ENCODE measurements at regions of chr22 and their contacts with region 1.

Region 1: DNA sequence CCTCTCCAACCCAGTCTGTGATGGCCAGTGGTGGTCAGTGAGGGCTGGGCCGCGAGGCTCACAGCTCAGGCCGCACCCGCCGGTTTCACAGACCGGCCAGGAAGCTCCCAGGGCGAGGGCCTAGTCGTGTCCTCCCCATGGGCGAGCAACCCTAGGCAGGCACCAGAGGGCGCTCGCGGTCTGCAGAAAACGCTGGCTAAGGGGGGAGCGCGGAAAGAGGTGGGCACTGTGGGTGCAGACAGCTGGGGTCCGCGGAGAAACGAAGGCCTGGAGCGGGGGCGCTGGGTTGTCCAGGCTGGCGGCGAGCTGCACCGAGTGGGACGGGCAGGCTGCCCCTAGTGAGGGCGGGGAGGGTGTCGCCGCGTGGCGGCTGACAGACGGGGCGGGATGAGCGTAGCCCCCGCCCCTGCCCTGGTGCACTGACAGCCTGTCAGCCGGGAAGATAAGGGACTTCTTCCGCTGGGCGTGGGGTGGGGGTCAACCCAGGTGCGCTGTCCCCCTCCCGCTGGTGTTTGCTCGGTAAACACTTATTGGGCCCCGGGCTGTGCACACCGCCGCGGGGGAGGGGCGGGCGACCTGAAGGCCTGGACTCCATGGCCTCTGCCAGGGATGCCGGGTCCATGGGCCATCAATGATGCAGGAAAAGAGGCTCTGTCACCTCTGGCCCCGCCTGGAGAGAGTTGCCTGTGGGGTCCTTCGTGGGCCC is 7.5 kb downstream of the GP1BB start:
- DNase-seq: peak; percentile 87
- ATAC-seq: peak; percentile 93
- H3K4me3 Mint-ChIP-seq: peak overlapping the region; percentile 44
- H3K27ac Mint-ChIP-seq: no peak overlapping the region
- H3K4me1 Mint-ChIP-seq: peaks cover 3% of the 10 kb centered on the region
- H3K27me3 Mint-ChIP-seq: peaks cover 3% of the 10 kb centered on the region

Region 2: DNA sequence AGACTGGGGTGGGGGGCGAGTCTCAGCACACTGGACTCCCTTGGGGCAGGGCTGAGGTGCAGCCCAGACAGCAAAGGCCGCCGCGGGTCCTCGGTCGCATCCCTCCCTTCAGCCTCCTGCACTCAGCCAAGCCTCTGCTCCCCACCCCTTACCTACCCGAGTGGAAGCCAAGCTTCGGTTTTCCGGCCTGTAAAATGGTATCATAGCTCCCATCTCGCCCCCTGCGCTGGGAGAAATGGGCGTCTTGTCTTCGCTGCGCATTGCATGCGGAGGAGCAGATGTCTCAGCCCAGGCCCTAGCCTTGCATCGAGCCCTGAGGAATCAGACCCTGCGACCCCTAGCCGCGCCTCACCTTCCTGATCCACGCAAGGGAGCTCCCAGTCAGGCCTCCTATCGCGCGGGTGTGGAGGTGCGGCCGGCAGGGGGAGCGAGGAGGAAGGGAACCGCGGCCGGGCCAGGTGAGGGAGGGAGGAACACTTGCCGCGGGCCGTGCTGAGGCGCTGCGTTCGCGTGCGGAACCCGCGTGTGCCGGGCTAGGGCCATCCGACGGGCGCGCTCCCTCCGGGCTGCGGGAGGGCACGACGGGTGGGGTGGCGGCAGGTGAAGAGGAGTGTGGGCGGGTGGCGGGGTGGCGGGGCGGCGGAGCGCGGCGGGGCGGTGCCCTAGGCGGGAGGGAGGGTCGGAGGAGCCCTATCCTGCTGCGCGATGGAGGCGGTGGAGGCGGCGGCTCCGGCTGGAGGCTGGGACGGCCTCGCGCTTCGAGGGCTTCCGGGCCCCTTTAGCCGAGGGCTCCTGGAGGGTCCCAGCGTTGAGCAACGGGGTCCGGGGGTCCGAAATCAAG is 25.7 kb after region 1 on chr22:
- CTCF ChIA-PET with region 1: interaction called, 24 read pairs
- DNase-seq: peak; percentile 73
- ATAC-seq: peak; percentile 75
- H3K4me3 Mint-ChIP-seq: no peak overlapping the region
- H3K27ac Mint-ChIP-seq: no peak overlapping the region
- H3K4me1 Mint-ChIP-seq: peaks cover 16% of the 10 kb centered on the region
- H3K27me3 Mint-ChIP-seq: peaks cover 70% of the 10 kb centered on the region

Region 3: DNA sequence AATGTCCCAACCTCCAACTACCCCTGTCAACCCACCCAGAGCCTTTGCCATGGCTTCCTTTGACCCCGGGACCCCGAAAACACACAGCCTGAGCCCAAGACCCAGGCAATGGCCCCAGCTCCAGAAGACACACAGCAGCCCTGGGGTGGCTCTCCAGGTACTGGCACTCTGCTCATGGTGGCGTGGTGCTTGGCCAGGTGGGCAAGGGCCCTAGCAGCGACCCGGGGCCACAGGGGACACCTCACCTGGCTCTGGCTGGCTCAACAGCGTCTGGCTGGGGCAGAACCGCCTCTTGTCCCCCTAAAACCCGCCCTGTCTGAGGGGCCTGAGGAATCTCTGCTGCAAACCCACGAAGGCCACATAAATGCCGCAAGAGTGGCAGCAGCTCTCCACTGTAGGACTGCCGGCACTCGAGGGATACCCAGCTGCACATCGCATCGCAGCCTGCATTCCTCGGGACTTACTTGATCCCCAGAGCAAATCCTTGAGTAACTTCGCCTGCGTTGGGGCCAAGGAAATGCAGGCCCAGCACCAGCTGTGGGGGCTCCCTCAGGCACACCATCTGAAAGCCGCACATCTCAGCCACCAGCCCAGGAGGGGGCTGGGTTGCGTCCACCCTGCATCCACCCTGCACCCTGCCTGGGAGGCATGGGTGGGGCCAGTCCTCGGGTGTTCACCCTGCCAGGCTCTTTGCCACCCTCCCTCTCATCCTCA is 147.0 kb after region 1 on chr22:
- CTCF ChIA-PET with region 1: no interaction called
- DNase-seq: no peak
- ATAC-seq: no peak
- H3K4me3 Mint-ChIP-seq: no peak overlapping the region
- H3K27ac Mint-ChIP-seq: no peak overlapping the region
- H3K4me1 Mint-ChIP-seq: peaks cover 3% of the 10 kb centered on the region
- H3K27me3 Mint-ChIP-seq: no peaks in the 10 kb centered on the region

Region 4: DNA sequence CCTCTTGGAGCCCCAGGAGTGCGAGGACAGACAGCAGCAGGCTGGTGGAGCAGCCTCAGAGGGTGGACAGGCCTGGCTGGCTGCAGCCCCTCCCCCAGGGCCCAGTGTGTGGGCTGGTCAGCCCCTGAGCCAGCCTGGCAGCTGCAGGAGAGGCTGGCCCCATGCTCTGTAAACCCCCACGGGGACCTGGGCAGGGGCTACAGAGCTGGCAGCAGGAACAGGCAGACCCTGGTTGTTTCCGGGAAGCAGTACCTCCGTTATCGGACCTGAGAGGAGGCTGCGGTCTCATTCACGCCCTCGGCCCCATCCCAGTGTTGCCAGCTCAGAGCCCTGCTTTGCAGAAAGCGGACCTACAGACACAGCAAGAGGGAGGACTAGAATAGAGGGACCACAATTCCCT is 172.2 kb after region 1 on chr22:
- CTCF ChIA-PET with region 1: interaction called, 35 read pairs
- DNase-seq: no peak
- ATAC-seq: no peak
- H3K4me3 Mint-ChIP-seq: no peak overlapping the region
- H3K27ac Mint-ChIP-seq: no peak overlapping the region
- H3K4me1 Mint-ChIP-seq: no peaks in the 10 kb centered on the region
- H3K27me3 Mint-ChIP-seq: no peaks in the 10 kb centered on the region

Region 5: DNA sequence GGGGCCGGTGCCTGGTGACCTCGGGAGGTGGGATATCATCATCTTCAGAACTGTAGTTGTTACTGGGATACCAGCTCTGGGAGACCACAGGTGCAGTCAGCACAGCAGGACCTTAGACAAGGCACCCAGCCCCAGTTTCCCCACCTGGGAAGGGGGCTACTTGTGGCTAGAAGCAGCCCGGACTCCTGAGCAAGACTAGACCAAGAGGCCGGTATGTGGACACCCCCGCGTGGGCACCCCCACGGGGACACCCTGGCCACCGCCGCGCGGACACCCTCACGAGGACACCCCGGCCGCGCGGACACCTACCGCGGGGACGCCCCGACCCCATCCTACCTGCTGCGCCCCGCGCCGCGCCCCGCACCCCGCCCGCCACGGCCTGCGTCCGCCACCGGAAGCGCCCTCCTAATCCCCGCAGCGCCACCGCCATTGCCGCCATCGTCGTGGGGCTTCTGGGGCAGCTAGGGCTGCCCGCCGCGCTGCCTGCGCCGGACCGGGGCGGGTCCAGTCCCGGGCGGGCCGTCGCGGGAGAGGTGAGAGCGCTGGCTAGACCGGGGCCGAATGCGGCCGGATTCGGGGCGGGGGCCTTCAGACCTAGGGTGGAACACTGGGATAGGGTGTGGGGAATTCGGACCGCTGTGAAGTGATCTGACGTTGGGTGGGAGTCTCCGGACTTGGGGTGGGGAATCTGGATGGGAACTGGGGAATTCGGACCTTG is 210.7 kb after region 1 on chr22 and contains the starts of genes COMT and TXNRD2:
- CTCF ChIA-PET with region 1: interaction called, 24 read pairs
- DNase-seq: peak; percentile 84
- ATAC-seq: peak; percentile 95
- H3K4me3 Mint-ChIP-seq: peak within 1 kb of the TSS; percentile 96
- H3K27ac Mint-ChIP-seq: peak within 1 kb of the TSS; percentile 96
- H3K4me1 Mint-ChIP-seq: peaks cover 22% of the 10 kb centered on the region
- H3K27me3 Mint-ChIP-seq: no peaks in the 10 kb centered on the region
- total RNA-seq, gene COMT: 92.6 to 95.3 TPM
- total RNA-seq, gene TXNRD2: 20.5 to 23.1 TPM

Region 6: GRCh38 chr22:19955241-19956128 is 224.7 kb after region 1 on chr22:
- CTCF ChIA-PET with region 1: interaction called, 23 read pairs
- DNase-seq: peak; percentile 77
- ATAC-seq: peak; percentile 80
- H3K4me3 Mint-ChIP-seq: peak overlapping the region; percentile 51
- H3K27ac Mint-ChIP-seq: peak overlapping the region; percentile 96
- H3K4me1 Mint-ChIP-seq: peaks cover 40% of the 10 kb centered on the region
- H3K27me3 Mint-ChIP-seq: no peaks in the 10 kb centered on the region